Calu3 (cell line): ENCODE measurements at regions of chr14 and their contacts with region 1.

Region 1: GRCh38 chr14:102279688-102280348 is 25.1 kb downstream of the MOK start:
- DNase-seq: peak; percentile 86
- H3K4me3 Mint-ChIP-seq: no peak overlapping the region
- H3K27ac Mint-ChIP-seq: peak overlapping the region; percentile 86
- H3K4me1 Mint-ChIP-seq: peaks cover 32% of the 10 kb centered on the region
- H3K27me3 Mint-ChIP-seq: no peaks in the 10 kb centered on the region
- CTCF ChIP-seq: no peak

Region 2: GRCh38 chr14:102235275-102235897 is 44.4 kb before region 1 on chr14:
- CTCF ChIA-PET with region 1: no interaction called
- intact Hi-C with region 1: loop called (anchors 1 kb)
- DNase-seq: peak; percentile 87
- H3K4me3 Mint-ChIP-seq: no peak overlapping the region
- H3K27ac Mint-ChIP-seq: no peak overlapping the region
- H3K4me1 Mint-ChIP-seq: no peaks in the 10 kb centered on the region
- H3K27me3 Mint-ChIP-seq: no peaks in the 10 kb centered on the region
- CTCF ChIP-seq: peak; percentile 70

Region 3: GRCh38 chr14:102262929-102263462 is 16.8 kb before region 1 on chr14:
- CTCF ChIA-PET with region 1: interaction called, 4 read pairs
- intact Hi-C with region 1: loop called (anchors 2 kb)
- DNase-seq: peak; percentile 79
- H3K4me3 Mint-ChIP-seq: no peak overlapping the region
- H3K27ac Mint-ChIP-seq: peak overlapping the region; percentile 90
- H3K4me1 Mint-ChIP-seq: peaks cover 41% of the 10 kb centered on the region
- H3K27me3 Mint-ChIP-seq: no peaks in the 10 kb centered on the region
- CTCF ChIP-seq: no peak

Region 4: GRCh38 chr14:102316743-102317563 is 37.1 kb after region 1 on chr14:
- CTCF ChIA-PET with region 1: no interaction called
- intact Hi-C with region 1: loop called (anchors 5 kb)
- DNase-seq: peak; percentile 95
- H3K4me3 Mint-ChIP-seq: peak overlapping the region; percentile 74
- H3K27ac Mint-ChIP-seq: peak overlapping the region; percentile 98
- H3K4me1 Mint-ChIP-seq: peaks cover 49% of the 10 kb centered on the region
- H3K27me3 Mint-ChIP-seq: no peaks in the 10 kb centered on the region
- CTCF ChIP-seq: peak; percentile 51